Psoas muscle (tissue), 8 donors: ENCODE measurements at regions of chr20 and their contacts with region 1.

Region 1: GRCh38 chr20:47205577-47206498 is 150.7 kb downstream of the ZMYND8 start:
- DNase-seq: peak; percentile 63 to 85
- ATAC-seq: peak; percentile 92 to 94 (median 94)
- H3K4me3 ChIP-seq: no peak overlapping the region
- H3K27ac ChIP-seq: no peak overlapping the region
- H3K4me1 ChIP-seq: no peaks in the 10 kb centered on the region
- H3K27me3 ChIP-seq: no peaks in the 10 kb centered on the region
- CTCF ChIP-seq: peak; percentile 98

Region 2: DNA sequence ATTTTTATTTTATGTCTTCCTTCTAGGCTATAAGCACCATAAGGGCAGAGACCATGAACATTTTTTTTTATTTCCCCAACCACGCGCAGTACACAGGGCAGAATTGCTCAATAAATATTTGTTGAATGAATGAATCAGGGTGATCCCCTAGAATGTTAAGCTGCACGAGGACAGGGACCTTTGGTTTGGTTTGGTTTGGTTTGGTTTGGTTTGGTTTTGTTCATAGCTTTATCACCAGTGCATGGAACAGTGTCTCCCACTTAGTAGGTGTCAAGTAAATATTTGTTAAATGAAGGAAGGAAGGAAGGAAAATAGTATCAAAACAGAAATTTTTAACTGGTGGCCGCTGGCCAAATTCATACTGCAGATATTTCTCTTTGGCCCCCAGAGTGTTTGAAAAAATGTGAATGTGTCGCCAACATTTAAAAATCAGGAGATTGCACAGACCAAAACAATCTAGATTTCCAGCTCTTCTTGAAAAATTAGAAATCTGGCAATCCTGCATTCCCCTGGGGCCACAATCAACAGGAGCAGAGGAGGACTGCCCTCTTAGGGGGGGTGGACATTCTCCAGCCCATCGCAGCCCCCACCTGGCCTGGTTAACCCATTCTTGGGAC is 105.9 kb before region 1 on chr20:
- intact Hi-C with region 1: no loop called
- DNase-seq: peak; percentile 48 to 66
- ATAC-seq: peak in 2 of 4 donors; percentile 57 to 67
- H3K4me3 ChIP-seq: no peak overlapping the region
- H3K27ac ChIP-seq: no peak overlapping the region
- H3K4me1 ChIP-seq: no peaks in the 10 kb centered on the region
- H3K27me3 ChIP-seq: peaks cover 0 to 4% (median 4%) of the 10 kb centered on the region in 3 donors
- CTCF ChIP-seq: no peak

Region 3: GRCh38 chr20:47262365-47263013 is 56.7 kb after region 1 on chr20:
- intact Hi-C with region 1: loop called in 1 of 2 experiments (anchors 5 kb)
- DNase-seq: peak in 1 of 2 donors; percentile 59
- ATAC-seq: peak; percentile 60 to 76 (median 70)
- H3K4me3 ChIP-seq: peak overlapping the region; percentile 11
- H3K27ac ChIP-seq: peak overlapping the region; percentile 70
- H3K4me1 ChIP-seq: peaks cover 23% of the 10 kb centered on the region
- H3K27me3 ChIP-seq: no peaks in the 10 kb centered on the region
- CTCF ChIP-seq: no peak

Region 4: GRCh38 chr20:47304287-47304686 is 98.4 kb after region 1 on chr20:
- intact Hi-C with region 1: no loop called
- DNase-seq: no peak
- ATAC-seq: peak in 2 of 4 donors; percentile 20 to 31
- H3K4me3 ChIP-seq: no peak overlapping the region
- H3K27ac ChIP-seq: peak overlapping the region; percentile 28
- H3K4me1 ChIP-seq: no peaks in the 10 kb centered on the region
- H3K27me3 ChIP-seq: no peaks in the 10 kb centered on the region
- CTCF ChIP-seq: no peak

Region 5: DNA sequence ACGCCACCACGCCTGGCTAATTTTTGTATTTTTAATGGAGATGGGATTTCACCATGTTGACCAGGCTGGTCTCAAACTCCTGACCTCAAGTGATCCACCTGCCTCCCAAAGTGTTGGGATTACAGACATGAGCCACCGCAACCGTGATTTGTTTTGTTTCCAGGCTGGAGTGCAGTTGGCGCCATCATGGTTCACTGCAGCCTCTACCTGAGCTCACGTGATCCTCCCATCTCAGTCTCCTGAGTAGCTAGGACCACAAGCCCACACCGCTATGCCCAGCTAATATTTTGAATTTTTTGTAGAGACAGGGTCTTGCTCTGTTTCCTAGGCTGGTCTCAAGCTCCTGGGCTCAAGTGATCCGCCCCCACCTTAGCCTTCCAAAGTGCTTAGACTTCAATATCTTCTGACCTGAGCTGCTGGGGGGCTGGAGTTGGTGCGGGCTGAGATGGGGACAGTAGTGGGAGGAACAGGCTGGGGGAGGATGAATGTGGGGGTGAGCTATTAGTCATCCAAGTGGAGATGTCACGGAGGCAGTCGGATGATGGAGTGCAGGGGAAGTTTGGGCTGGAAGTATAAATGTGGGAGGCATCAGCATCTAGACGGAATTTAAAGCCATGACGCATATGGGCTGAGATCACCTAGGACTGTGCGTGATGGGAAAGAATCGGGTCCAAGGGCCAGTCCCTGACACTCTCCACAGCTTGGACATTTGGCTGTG is 173.8 kb after region 1 on chr20:
- intact Hi-C with region 1: loop called (anchors 2 to 5 kb)
- DNase-seq: no peak
- ATAC-seq: no peak
- H3K4me3 ChIP-seq: no peak overlapping the region
- H3K27ac ChIP-seq: no peak overlapping the region
- H3K4me1 ChIP-seq: peaks cover 11% of the 10 kb centered on the region
- H3K27me3 ChIP-seq: no peaks in the 10 kb centered on the region
- CTCF ChIP-seq: no peak

Region 6: DNA sequence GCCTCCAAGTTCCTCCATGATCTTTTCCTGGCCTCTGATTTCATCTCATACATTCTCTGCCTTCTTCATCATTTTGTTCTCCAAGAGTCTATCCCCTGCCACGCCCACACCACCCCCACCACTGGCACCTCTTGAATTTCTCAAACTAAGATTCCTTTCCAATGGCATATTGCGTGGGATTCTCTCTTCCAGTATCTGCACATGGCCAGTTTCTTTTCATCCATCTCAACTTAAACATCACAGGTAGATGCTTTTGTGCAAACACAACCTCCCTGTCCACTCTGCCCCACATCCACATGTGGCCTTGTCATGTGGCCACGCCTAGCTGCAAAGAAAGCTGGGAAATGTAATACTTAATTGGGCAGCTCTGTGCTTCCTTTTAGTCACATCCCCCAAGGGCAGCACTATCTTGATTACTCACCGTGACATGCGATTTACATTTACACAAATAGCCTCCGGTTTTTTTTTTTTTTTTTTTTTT is 184.1 kb after region 1 on chr20:
- intact Hi-C with region 1: loop called in 1 of 2 experiments (anchors 2 kb)
- DNase-seq: no peak
- ATAC-seq: peak in 2 of 4 donors; percentile 50 to 64
- H3K4me3 ChIP-seq: no peak overlapping the region
- H3K27ac ChIP-seq: no peak overlapping the region
- H3K4me1 ChIP-seq: peaks cover 5% of the 10 kb centered on the region
- H3K27me3 ChIP-seq: no peaks in the 10 kb centered on the region
- CTCF ChIP-seq: no peak